A549 (cell line): ENCODE measurements at regions of chr3 and their contacts with region 1.

Region 1: GRCh38 chr3:14124615-14125190 is at the starts of genes CHCHD4 and TMEM43:
- DNase-seq: peak; percentile 99 to 100
- ATAC-seq: peak; percentile 81 to 92
- H3K4me3 ChIP-seq: peak within 1 kb of the TSS; percentile 91
- H3K27ac ChIP-seq: peak within 1 kb of the TSS; percentile 94 to 98
- H3K4me1 ChIP-seq: peaks cover 17% of the 10 kb centered on the region
- CTCF ChIP-seq: no peak
- EP300 ChIP-seq: no peak
- POLR2A ChIP-seq: peak; percentile 56
- RAD21 ChIP-seq: no peak
- polyA plus RNA-seq, gene CHCHD4: 41.9 and 48.8 TPM in 2 replicates
- polyA plus RNA-seq, gene TMEM43: 75.2 and 79.0 TPM in 2 replicates

Region 2: DNA sequence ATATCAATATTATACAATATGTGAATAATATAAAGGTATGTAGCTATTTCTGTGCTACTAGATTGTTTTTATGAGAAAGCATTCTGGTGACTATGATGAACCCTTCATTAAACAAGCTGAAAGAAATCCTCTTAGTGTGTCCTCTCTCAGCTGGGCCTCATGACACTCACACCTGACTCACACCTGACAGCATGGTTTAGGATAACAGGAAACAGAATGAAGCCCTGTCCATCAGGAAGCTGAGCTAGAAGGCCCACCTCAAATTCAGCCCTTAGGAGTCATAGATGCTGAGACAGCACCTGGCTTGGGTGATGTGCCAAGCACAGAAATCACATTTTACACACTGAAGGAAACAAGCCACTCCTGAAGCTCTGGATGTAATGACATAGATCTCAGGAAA is 30.9 kb before region 1 on chr3:
- CTCF ChIA-PET with region 1: no interaction called
- POLR2A ChIA-PET with region 1: no interaction called
- DNase-seq: no peak
- ATAC-seq: no peak
- H3K4me3 ChIP-seq: no peak overlapping the region
- H3K27ac ChIP-seq: no peak overlapping the region
- H3K4me1 ChIP-seq: no peaks in the 10 kb centered on the region
- CTCF ChIP-seq: no peak
- EP300 ChIP-seq: no peak
- POLR2A ChIP-seq: no peak
- RAD21 ChIP-seq: no peak

Region 3: DNA sequence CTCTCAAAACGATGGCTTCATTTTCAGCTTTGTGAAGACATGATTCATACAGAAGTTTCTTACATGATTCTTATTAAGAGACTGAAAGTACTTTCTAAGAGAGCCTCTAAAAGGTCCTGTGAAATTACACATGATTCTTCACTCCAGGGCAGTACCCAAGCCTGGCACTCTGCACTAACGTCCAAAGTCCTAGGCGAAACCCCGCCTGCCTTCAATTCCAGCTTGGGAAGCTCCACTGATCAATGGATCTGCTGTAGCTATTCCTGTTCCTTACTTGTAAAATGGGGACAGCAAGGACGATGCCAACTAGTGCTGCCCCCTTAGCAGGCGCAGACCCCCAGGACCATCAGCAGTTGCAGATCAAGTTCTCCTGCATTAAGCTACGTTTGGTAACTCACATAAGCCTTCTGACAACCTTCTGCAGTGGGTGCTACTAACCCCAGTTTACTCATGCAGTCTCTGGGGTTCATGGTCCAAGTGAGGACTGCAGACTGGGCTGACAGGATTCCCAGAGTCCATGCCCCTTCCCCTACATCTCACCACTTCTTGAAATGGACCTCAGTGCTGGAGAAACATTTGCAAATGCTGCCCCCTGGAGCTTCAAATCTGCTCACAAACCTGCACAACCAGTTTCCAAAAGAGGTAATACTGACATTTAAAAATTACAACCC is 10.6 kb before region 1 on chr3:
- CTCF ChIA-PET with region 1: interaction called, 12 read pairs
- POLR2A ChIA-PET with region 1: interaction called, 5 read pairs
- DNase-seq: no peak
- ATAC-seq: no peak
- H3K4me3 ChIP-seq: no peak overlapping the region
- H3K27ac ChIP-seq: no peak overlapping the region
- H3K4me1 ChIP-seq: peaks cover 14% of the 10 kb centered on the region
- CTCF ChIP-seq: no peak
- EP300 ChIP-seq: no peak
- POLR2A ChIP-seq: no peak
- RAD21 ChIP-seq: peak; percentile 17 to 38; a peak in 2 of 5 replicates

Region 4: DNA sequence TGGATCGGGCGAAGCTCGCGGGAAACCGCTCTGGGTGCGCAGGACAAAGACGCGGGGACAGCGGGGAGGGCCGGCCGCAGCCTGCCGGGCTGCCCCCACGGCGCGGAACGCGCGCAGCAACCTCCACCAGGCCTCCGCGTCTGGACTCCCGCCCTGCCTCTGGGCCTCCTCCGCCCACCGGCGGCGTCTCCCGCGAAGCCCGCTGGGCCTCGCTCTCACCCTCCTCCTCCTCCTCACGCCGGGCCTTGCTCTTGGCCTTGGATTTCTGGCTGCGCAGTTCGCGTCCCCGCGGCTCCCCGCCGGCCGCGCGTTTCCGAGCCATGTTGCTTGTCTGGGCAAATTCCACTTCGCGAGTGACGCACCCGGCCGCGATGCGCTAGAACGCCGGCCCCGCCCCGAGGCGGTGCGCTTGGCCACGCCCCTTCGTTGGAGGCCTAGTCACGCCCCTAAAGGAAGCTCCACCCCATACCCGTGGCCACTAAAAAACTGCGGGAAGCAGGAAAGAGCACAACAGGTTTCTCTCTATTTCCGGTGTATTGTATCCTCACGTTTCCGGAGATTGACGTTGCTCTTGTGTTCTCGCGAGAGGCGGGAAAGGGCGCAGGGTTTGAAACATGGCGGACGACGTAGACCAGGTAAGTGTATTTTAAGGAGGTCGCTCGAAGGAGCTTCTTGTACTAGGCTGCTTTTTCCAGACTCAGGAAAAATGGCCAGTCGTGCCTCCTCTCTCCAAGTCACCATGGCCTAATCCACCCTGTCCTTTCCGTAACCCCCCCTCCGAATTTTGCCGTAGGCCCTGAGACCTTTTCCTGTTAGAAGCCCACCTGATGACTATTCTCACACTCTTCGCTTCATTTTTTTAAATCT is 53.8 kb after region 1 on chr3 and contains the starts of genes LSM3 and XPC:
- CTCF ChIA-PET with region 1: interaction called, 6 read pairs
- POLR2A ChIA-PET with region 1: interaction called, 41 read pairs
- DNase-seq: peak; percentile 90 to 99
- ATAC-seq: peak; percentile 94 to 98
- H3K4me3 ChIP-seq: peak within 1 kb of the TSS; percentile 71
- H3K27ac ChIP-seq: peak within 1 kb of the TSS; percentile 95 to 97
- H3K4me1 ChIP-seq: peaks cover 41% of the 10 kb centered on the region
- CTCF ChIP-seq: no peak
- EP300 ChIP-seq: no peak
- POLR2A ChIP-seq: peak; percentile 87
- RAD21 ChIP-seq: peak in 1 of 2 experiments; percentile 23; a peak in 1 of 5 replicates
- polyA plus RNA-seq, gene LSM3: 11.8 and 23.9 TPM in 2 replicates
- polyA plus RNA-seq, gene XPC: 36.3 and 58.9 TPM in 2 replicates